ENCODE measurements at regions of chrX and their contacts with region 1.

Region 1: GRCh38 chrX:103464774-103465117 is 54.5 kb downstream of the RAB40A start:
- DNase-seq: peak; percentile 44
- ATAC-seq: peak; percentile 95
- H3K4me3 ChIP-seq: peak overlapping the region in 2 of 3 experiments; percentile 8 to 62; a peak in 3 of 6 replicates
- H3K27ac ChIP-seq: no peak overlapping the region
- H3K4me1 ChIP-seq: no peaks in the 10 kb centered on the region; the same call in 1 of the 2 replicates
- H3K27me3 ChIP-seq: no peaks in the 10 kb centered on the region
- CTCF ChIP-seq: peak; percentile 74
- EP300 ChIP-seq: no peak
- POLR2A ChIP-seq: no peak
- RAD21 ChIP-seq: no peak

Region 2: GRCh38 chrX:103214870-103215424 is 249.8 kb before region 1 on chrX and contains the start of gene BEX4:
- CTCF ChIA-PET with region 1: interaction called, 6 read pairs
- POLR2A ChIA-PET with region 1: no interaction called
- in situ Hi-C with region 1: loop called (anchors 25 kb)
- intact Hi-C with region 1: loop called (anchors 1 kb)
- DNase-seq: no peak
- ATAC-seq: no peak
- H3K4me3 ChIP-seq: no peak within 1 kb of the TSS
- H3K27ac ChIP-seq: no peak within 1 kb of the TSS
- H3K4me1 ChIP-seq: no peaks in the 10 kb centered on the region
- H3K27me3 ChIP-seq: no peaks in the 10 kb centered on the region
- CTCF ChIP-seq: no peak
- EP300 ChIP-seq: no peak
- POLR2A ChIP-seq: no peak
- RAD21 ChIP-seq: no peak
- total RNA-seq, gene BEX4: not detected in 2 replicates

Region 3: GRCh38 chrX:103343105-103343504 is 121.6 kb before region 1 on chrX:
- CTCF ChIA-PET with region 1: interaction called, 22 read pairs
- POLR2A ChIA-PET with region 1: no interaction called
- in situ Hi-C with region 1: loop called (anchors 10 kb)
- intact Hi-C with region 1: loop called (anchors 1 kb)
- DNase-seq: no peak
- ATAC-seq: no peak
- H3K4me3 ChIP-seq: no peak overlapping the region
- H3K27ac ChIP-seq: no peak overlapping the region
- H3K4me1 ChIP-seq: no peaks in the 10 kb centered on the region
- H3K27me3 ChIP-seq: no peaks in the 10 kb centered on the region
- CTCF ChIP-seq: peak; percentile 59
- EP300 ChIP-seq: no peak
- POLR2A ChIP-seq: no peak
- RAD21 ChIP-seq: no peak